Naive thymus-derived CD4-positive, alpha-beta T cell (primary cell): ENCODE measurements at regions of chr11 and their contacts with region 1.

Region 1: GRCh38 chr11:118435893-118436624 is at the start of gene KMT2A:
- DNase-seq: peak; percentile 89 to 100 (median 96)
- ATAC-seq: peak; percentile 94
- H3K4me3 ChIP-seq: peak within 1 kb of the TSS; percentile 91
- H3K4me3 Mint-ChIP-seq: peak within 1 kb of the TSS; percentile 89 to 97 (median 96)
- H3K27ac ChIP-seq: peak within 1 kb of the TSS; percentile 99
- H3K27ac Mint-ChIP-seq: peak within 1 kb of the TSS; percentile 91 to 99 (median 95)
- H3K4me1 ChIP-seq: peaks cover 24 to 28% of the 10 kb centered on the region in 2 donors
- H3K4me1 Mint-ChIP-seq: peaks cover 36 to 45% (median 38%) of the 10 kb centered on the region in 7 donors
- H3K27me3 ChIP-seq: no peaks in the 10 kb centered on the region
- H3K27me3 Mint-ChIP-seq: peaks cover 0 to 8% (median 0%) of the 10 kb centered on the region in 5 donors
- total RNA-seq, gene KMT2A: 140 to 192 (median 161) TPM

Region 2: GRCh38 chr11:118002541-118003423 is 433.3 kb before region 1 on chr11:
- CTCF ChIA-PET with region 1: no interaction called
- POLR2A ChIA-PET with region 1: no interaction called
- intact Hi-C with region 1: loop called in 1 of 2 experiments (anchors 10 kb)
- DNase-seq: peak in 1 of 9 donors; percentile 70
- ATAC-seq: peak; percentile 55
- H3K4me3 ChIP-seq: peak overlapping the region; percentile 23
- H3K4me3 Mint-ChIP-seq: peak overlapping the region; percentile 1 to 82 (median 60)
- H3K27ac ChIP-seq: peak overlapping the region; percentile 58
- H3K27ac Mint-ChIP-seq: peak overlapping the region; percentile 51 to 98 (median 87)
- H3K4me1 ChIP-seq: peaks cover 64 to 96% of the 10 kb centered on the region in 2 donors
- H3K4me1 Mint-ChIP-seq: peaks cover 66 to 97% (median 80%) of the 10 kb centered on the region in 7 donors
- H3K27me3 ChIP-seq: no peaks in the 10 kb centered on the region
- H3K27me3 Mint-ChIP-seq: no peaks in the 10 kb centered on the region

Region 3: GRCh38 chr11:118359295-118359958 is 76.6 kb before region 1 on chr11 and contains the start of gene UBE4A:
- CTCF ChIA-PET with region 1: no interaction called
- POLR2A ChIA-PET with region 1: interaction called, 5 read pairs
- intact Hi-C with region 1: loop called (anchors 1 kb)
- DNase-seq: peak; percentile 89 to 96 (median 95)
- ATAC-seq: peak; percentile 96
- H3K4me3 ChIP-seq: peak within 1 kb of the TSS; percentile 87
- H3K4me3 Mint-ChIP-seq: peak within 1 kb of the TSS; percentile 92 to 99 (median 96)
- H3K27ac ChIP-seq: peak within 1 kb of the TSS; percentile 93
- H3K27ac Mint-ChIP-seq: peak within 1 kb of the TSS; percentile 96 to 100 (median 98)
- H3K4me1 ChIP-seq: peaks cover 18 to 27% of the 10 kb centered on the region in 2 donors
- H3K4me1 Mint-ChIP-seq: peaks cover 30 to 61% (median 51%) of the 10 kb centered on the region in 7 donors
- H3K27me3 ChIP-seq: no peaks in the 10 kb centered on the region
- H3K27me3 Mint-ChIP-seq: peaks cover 0 to 6% (median 0%) of the 10 kb centered on the region in 5 donors
- total RNA-seq, gene UBE4A: 38.4 to 54.5 (median 46.9) TPM

Region 4: GRCh38 chr11:118448294-118448693 is 12.2 kb after region 1 on chr11:
- CTCF ChIA-PET with region 1: interaction called, 4 read pairs
- POLR2A ChIA-PET with region 1: interaction called, 8 read pairs
- intact Hi-C with region 1: loop called (anchors 1 kb)
- DNase-seq: no peak
- ATAC-seq: no peak
- H3K4me3 ChIP-seq: no peak overlapping the region
- H3K4me3 Mint-ChIP-seq: peak overlapping the region in 2 of 10 donors; percentile 24 to 36
- H3K27ac ChIP-seq: peak overlapping the region; percentile 14
- H3K27ac Mint-ChIP-seq: peak overlapping the region in 1 of 9 donors; percentile 48
- H3K4me1 ChIP-seq: peaks cover 32 to 42% of the 10 kb centered on the region in 2 donors
- H3K4me1 Mint-ChIP-seq: peaks cover 57 to 82% (median 69%) of the 10 kb centered on the region in 7 donors
- H3K27me3 ChIP-seq: no peaks in the 10 kb centered on the region
- H3K27me3 Mint-ChIP-seq: no peaks in the 10 kb centered on the region

Region 5: DNA sequence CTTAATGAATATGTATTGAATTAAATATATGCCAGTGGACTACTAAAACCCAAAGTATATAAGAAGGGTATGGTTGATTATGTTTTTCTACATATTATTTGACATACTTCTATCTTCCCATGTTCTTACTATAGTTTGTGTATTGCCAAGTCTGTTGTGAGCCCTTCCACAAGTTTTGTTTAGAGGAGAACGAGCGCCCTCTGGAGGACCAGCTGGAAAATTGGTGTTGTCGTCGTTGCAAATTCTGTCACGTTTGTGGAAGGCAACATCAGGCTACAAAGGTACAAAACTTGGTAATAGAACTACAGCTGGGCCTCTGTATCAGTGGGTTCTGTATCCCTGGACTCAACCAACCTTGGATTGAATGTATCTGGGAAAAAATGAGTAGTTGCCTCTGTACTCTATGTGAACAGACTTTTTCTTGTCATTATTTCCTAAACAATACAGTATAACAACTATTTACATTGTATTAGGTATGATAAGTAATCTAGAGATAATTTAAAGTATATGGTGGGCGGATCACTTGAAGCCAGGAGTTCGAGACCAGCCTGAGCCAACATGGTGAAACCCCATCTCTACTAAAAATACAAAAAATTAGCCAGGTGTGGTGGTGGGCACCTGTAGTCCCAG is 52.5 kb after region 1 on chr11:
- CTCF ChIA-PET with region 1: interaction called, 4 read pairs
- POLR2A ChIA-PET with region 1: no interaction called
- intact Hi-C with region 1: loop called (anchors 1 kb)
- DNase-seq: peak; percentile 66 to 86 (median 80)
- ATAC-seq: peak; percentile 89
- H3K4me3 ChIP-seq: no peak overlapping the region
- H3K4me3 Mint-ChIP-seq: no peak overlapping the region
- H3K27ac ChIP-seq: peak overlapping the region; percentile 53
- H3K27ac Mint-ChIP-seq: peak overlapping the region in 7 of 9 donors; percentile 10 to 89 (median 57)
- H3K4me1 ChIP-seq: no peaks in the 10 kb centered on the region
- H3K4me1 Mint-ChIP-seq: peaks cover 0 to 12% (median 5%) of the 10 kb centered on the region in 7 donors
- H3K27me3 ChIP-seq: no peaks in the 10 kb centered on the region
- H3K27me3 Mint-ChIP-seq: no peaks in the 10 kb centered on the region

Region 6: GRCh38 chr11:118652681-118653181 is 216.7 kb after region 1 on chr11:
- CTCF ChIA-PET with region 1: no interaction called
- POLR2A ChIA-PET with region 1: no interaction called
- intact Hi-C with region 1: no loop called
- DNase-seq: no peak
- ATAC-seq: peak; percentile 45
- H3K4me3 ChIP-seq: no peak overlapping the region
- H3K4me3 Mint-ChIP-seq: no peak overlapping the region
- H3K27ac ChIP-seq: no peak overlapping the region
- H3K27ac Mint-ChIP-seq: peak overlapping the region in 6 of 9 donors; percentile 6 to 58 (median 16)
- H3K4me1 ChIP-seq: no peaks in the 10 kb centered on the region
- H3K4me1 Mint-ChIP-seq: peaks cover 6 to 18% (median 11%) of the 10 kb centered on the region in 7 donors
- H3K27me3 ChIP-seq: no peaks in the 10 kb centered on the region
- H3K27me3 Mint-ChIP-seq: no peaks in the 10 kb centered on the region

Region 7: GRCh38 chr11:119101759-119102423 is 665.8 kb after region 1 on chr11 and contains the start of gene DPAGT1:
- CTCF ChIA-PET with region 1: no interaction called
- POLR2A ChIA-PET with region 1: no interaction called
- intact Hi-C with region 1: loop called in 1 of 2 experiments (anchors 5 kb)
- DNase-seq: peak; percentile 68 to 90 (median 86)
- ATAC-seq: peak; percentile 90
- H3K4me3 ChIP-seq: peak within 1 kb of the TSS; percentile 79
- H3K4me3 Mint-ChIP-seq: peak within 1 kb of the TSS; percentile 91 to 100 (median 96)
- H3K27ac ChIP-seq: peak within 1 kb of the TSS; percentile 95
- H3K27ac Mint-ChIP-seq: peak within 1 kb of the TSS; percentile 98 to 100 (median 99)
- H3K4me1 ChIP-seq: peaks cover 21 to 26% of the 10 kb centered on the region in 2 donors
- H3K4me1 Mint-ChIP-seq: peaks cover 24 to 64% (median 50%) of the 10 kb centered on the region in 7 donors
- H3K27me3 ChIP-seq: no peaks in the 10 kb centered on the region
- H3K27me3 Mint-ChIP-seq: no peaks in the 10 kb centered on the region
- total RNA-seq, gene DPAGT1: 21.9 to 63.9 (median 37.9) TPM